B cell (primary cell): ENCODE measurements at regions of chr20 and their contacts with region 1.

Region 1: GRCh38 chr20:58236612-58237330 is 8.3 kb upstream of the ANKRD60 start:
- DNase-seq: peak; percentile 83
- ATAC-seq: peak; percentile 92
- H3K4me3 ChIP-seq: peak overlapping the region; percentile 63 to 88 (median 71)
- H3K4me3 Mint-ChIP-seq: peak overlapping the region; percentile 93
- H3K27ac ChIP-seq: peak overlapping the region; percentile 27 to 73
- H3K27ac Mint-ChIP-seq: peak overlapping the region; percentile 79
- H3K4me1 ChIP-seq: peaks cover 0 to 3% of the 10 kb centered on the region in 2 donors
- H3K4me1 Mint-ChIP-seq: peaks cover 8% of the 10 kb centered on the region
- H3K27me3 ChIP-seq: no peaks in the 10 kb centered on the region
- H3K27me3 Mint-ChIP-seq: no peaks in the 10 kb centered on the region
- CTCF ChIP-seq: peak; percentile 98

Region 2: DNA sequence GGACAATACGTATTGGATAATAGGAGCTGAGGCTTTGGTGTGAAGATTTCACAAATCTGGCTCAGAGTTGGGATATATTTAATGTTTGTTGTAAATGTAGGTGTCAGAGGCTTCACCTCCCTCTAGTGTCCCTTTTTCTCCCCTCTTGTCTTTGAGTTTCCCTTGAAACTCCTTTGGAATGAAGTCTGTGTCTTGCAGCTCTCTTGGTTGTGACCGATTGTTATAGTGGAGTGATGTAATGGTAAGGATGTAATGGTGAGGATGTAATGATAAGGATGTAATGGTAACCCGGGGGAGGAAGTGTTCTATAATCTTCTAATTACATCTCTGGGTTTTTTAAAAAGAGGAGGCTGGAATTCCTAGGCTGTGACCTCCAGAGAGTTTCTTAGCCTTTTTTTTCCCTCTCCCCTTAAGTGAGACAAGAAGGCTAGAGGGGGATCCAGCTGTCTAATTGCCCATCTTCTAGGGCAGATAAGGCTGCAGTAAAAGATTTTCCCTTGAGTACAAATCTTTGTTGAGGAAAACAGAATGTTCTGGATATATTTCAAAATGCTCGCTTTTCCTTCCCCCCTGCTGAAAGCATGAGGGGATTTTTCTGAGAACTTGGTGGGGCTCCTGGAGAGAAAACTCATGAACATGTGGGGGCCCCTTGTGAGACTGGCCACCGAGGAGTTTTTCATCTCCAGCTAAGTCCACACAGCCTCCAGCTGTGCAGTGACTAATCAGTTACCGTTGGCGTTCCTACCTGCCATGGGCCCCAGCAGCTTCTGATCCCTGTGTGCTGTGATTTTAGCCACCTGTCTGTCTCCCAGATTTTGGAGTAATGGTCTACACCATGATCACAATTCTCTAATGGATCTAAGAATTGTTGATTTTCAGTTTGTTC is 370.3 kb before region 1 on chr20:
- CTCF ChIA-PET with region 1: no interaction called
- POLR2A ChIA-PET with region 1: no interaction called
- intact Hi-C with region 1: no loop called
- DNase-seq: no peak
- ATAC-seq: no peak
- H3K4me3 ChIP-seq: no peak overlapping the region
- H3K4me3 Mint-ChIP-seq: no peak overlapping the region
- H3K27ac ChIP-seq: no peak overlapping the region
- H3K27ac Mint-ChIP-seq: no peak overlapping the region
- H3K4me1 ChIP-seq: no peaks in the 10 kb centered on the region
- H3K4me1 Mint-ChIP-seq: no peaks in the 10 kb centered on the region
- H3K27me3 ChIP-seq: peaks cover 0 to 25% (median 8%) of the 10 kb centered on the region in 4 experiments
- H3K27me3 Mint-ChIP-seq: peaks cover 57% of the 10 kb centered on the region
- CTCF ChIP-seq: no peak

Region 3: DNA sequence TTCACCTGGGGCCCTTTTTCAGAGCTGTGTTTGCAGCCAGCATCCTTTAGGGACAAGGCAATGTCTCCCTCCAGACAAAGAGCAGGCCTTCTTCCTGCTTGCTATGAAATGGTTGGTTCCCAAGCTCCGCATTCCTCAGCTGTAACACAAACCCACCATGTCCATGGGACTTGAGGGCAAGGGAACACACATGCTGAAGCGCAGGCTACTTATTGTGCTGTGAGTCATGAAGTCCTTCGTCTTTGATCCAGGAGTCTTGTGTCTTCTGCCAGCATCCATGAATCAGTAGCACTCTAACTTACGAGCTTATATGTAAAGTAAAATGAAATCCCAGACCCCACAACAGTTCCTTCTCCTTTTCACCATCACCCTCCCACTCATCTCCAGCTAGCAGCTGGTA is 67.3 kb before region 1 on chr20:
- CTCF ChIA-PET with region 1: no interaction called
- POLR2A ChIA-PET with region 1: no interaction called
- intact Hi-C with region 1: no loop called
- DNase-seq: no peak
- ATAC-seq: no peak
- H3K4me3 ChIP-seq: no peak overlapping the region
- H3K4me3 Mint-ChIP-seq: no peak overlapping the region
- H3K27ac ChIP-seq: no peak overlapping the region
- H3K27ac Mint-ChIP-seq: no peak overlapping the region
- H3K4me1 ChIP-seq: peaks cover 0 to 4% of the 10 kb centered on the region in 2 donors
- H3K4me1 Mint-ChIP-seq: peaks cover 7% of the 10 kb centered on the region
- H3K27me3 ChIP-seq: peaks cover 0 to 2% (median 0%) of the 10 kb centered on the region in 4 experiments
- H3K27me3 Mint-ChIP-seq: peaks cover 17% of the 10 kb centered on the region
- CTCF ChIP-seq: no peak

Region 4: GRCh38 chr20:58388882-58389323 is 152.1 kb after region 1 on chr20 and contains the start of gene VAPB:
- CTCF ChIA-PET with region 1: interaction called, 4 read pairs
- POLR2A ChIA-PET with region 1: no interaction called
- intact Hi-C with region 1: loop called (anchors 5 kb)
- DNase-seq: peak; percentile 97
- ATAC-seq: peak; percentile 96
- H3K4me3 ChIP-seq: peak within 1 kb of the TSS; percentile 60 to 86 (median 75)
- H3K4me3 Mint-ChIP-seq: peak within 1 kb of the TSS; percentile 95
- H3K27ac ChIP-seq: peak within 1 kb of the TSS; percentile 97 to 99
- H3K27ac Mint-ChIP-seq: peak within 1 kb of the TSS; percentile 94
- H3K4me1 ChIP-seq: peaks cover 18 to 21% of the 10 kb centered on the region in 2 donors
- H3K4me1 Mint-ChIP-seq: peaks cover 37% of the 10 kb centered on the region
- H3K27me3 ChIP-seq: peaks cover 0 to 3% (median 0%) of the 10 kb centered on the region in 4 experiments
- H3K27me3 Mint-ChIP-seq: peaks cover 3% of the 10 kb centered on the region
- CTCF ChIP-seq: no peak
- total RNA-seq, gene VAPB: 26.4 and 29.5 TPM in 2 replicates

Region 5: DNA sequence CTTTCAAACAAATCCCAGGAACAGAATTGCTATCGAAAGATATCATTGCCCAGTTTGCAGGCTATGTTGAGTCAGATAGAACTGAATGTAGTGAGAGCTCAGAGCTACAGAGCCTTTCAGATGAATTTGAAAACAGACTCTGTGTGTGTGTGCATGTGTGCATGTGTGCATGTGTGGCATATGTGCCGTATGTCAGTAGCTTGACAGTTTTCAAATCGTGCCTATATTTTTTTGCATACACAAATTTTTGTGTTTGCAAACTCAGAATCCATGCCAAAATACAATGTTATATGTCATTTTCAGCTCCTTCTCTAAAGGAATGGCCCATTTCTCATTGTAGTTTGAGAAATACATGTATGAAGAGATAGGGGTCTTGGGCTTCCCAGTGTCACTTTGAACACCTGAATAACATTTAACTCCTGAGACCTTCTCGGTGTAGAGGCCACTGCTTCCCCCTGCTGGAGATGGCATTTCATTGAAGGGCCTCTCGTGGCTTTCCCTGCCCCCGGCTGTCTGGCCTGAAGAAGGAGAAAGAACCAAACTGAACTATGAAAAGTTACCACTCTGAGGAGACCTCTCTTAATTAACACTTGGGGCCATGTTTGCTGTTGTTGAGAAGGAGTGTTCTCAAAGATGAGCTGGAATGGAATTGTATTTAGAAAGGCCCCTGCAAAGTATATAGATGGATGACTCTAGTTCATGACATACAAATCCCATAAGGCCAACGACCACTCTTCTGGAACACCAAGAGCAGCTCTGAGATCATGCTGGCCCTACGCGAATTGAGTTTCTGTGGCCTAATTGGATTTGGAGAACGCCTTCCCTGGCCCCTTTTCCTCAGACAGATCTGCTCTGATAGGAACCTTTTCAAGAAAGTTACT is 211.0 kb after region 1 on chr20:
- CTCF ChIA-PET with region 1: interaction called, 45 read pairs
- POLR2A ChIA-PET with region 1: no interaction called
- intact Hi-C with region 1: loop called (anchors 1 kb)
- DNase-seq: peak; percentile 53
- ATAC-seq: peak; percentile 45
- H3K4me3 ChIP-seq: no peak overlapping the region
- H3K4me3 Mint-ChIP-seq: no peak overlapping the region
- H3K27ac ChIP-seq: no peak overlapping the region
- H3K27ac Mint-ChIP-seq: no peak overlapping the region
- H3K4me1 ChIP-seq: peaks cover 0 to 5% of the 10 kb centered on the region in 2 donors
- H3K4me1 Mint-ChIP-seq: peaks cover 10% of the 10 kb centered on the region
- H3K27me3 ChIP-seq: no peaks in the 10 kb centered on the region
- H3K27me3 Mint-ChIP-seq: no peaks in the 10 kb centered on the region
- CTCF ChIP-seq: peak; percentile 62

Region 6: GRCh38 chr20:58634521-58635278 is 397.9 kb after region 1 on chr20:
- CTCF ChIA-PET with region 1: no interaction called
- POLR2A ChIA-PET with region 1: no interaction called
- intact Hi-C with region 1: no loop called
- DNase-seq: peak; percentile 54
- ATAC-seq: peak; percentile 80
- H3K4me3 ChIP-seq: peak overlapping the region in 4 of 5 experiments; percentile 36 to 55 (median 46)
- H3K4me3 Mint-ChIP-seq: peak overlapping the region; percentile 90
- H3K27ac ChIP-seq: peak overlapping the region in 1 of 2 donors; percentile 25
- H3K27ac Mint-ChIP-seq: no peak overlapping the region
- H3K4me1 ChIP-seq: peaks cover 13 to 15% of the 10 kb centered on the region in 2 donors
- H3K4me1 Mint-ChIP-seq: peaks cover 14% of the 10 kb centered on the region
- H3K27me3 ChIP-seq: peaks cover 0 to 32% (median 12%) of the 10 kb centered on the region in 4 experiments
- H3K27me3 Mint-ChIP-seq: peaks cover 40% of the 10 kb centered on the region
- CTCF ChIP-seq: no peak

Region 7: DNA sequence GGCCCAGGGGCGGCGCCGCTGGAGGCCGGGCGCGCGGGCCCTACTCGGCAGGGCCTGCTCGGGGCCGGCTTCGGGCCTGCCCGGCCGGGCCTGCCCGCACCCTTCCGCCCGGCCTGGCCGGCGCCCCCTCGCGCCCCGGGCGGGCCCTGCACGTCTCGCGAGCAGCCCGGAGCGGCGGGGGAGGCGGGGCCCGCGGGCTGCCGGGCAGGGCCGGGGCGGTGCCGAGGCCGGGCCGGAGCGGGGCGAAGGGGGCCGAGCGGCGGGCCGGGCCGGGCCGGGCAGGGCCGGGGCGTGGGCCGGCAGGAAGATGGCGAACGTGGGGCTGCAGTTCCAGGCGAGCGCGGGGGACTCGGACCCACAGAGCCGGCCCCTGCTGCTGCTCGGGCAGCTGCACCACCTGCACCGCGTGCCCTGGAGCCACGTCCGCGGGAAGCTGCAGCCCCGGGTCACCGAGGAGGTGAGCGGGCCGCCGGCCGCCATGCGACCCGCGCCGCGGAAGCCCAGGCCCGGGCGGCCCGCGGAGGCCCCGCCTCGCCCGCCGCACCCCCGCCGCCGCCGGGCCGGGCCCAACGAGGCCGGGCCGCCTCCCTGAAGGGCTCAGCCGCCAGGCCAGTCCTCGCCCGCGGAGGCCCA is 455.9 kb after region 1 on chr20 and contains the start of gene NPEPL1:
- CTCF ChIA-PET with region 1: interaction called, 3 read pairs
- POLR2A ChIA-PET with region 1: no interaction called
- intact Hi-C with region 1: loop called (anchors 2 kb)
- DNase-seq: peak; percentile 76
- ATAC-seq: peak; percentile 97
- H3K4me3 ChIP-seq: peak within 1 kb of the TSS in 4 of 5 experiments; percentile 22 to 57 (median 50)
- H3K4me3 Mint-ChIP-seq: peak within 1 kb of the TSS; percentile 86
- H3K27ac ChIP-seq: peak within 1 kb of the TSS; percentile 18 to 59
- H3K27ac Mint-ChIP-seq: peak within 1 kb of the TSS; percentile 80
- H3K4me1 ChIP-seq: peaks cover 8% of the 10 kb centered on the region in 2 donors
- H3K4me1 Mint-ChIP-seq: peaks cover 14% of the 10 kb centered on the region
- H3K27me3 ChIP-seq: no peaks in the 10 kb centered on the region
- H3K27me3 Mint-ChIP-seq: no peaks in the 10 kb centered on the region
- CTCF ChIP-seq: no peak
- total RNA-seq, gene NPEPL1: 34.3 and 37.2 TPM in 2 replicates

Region 8: DNA sequence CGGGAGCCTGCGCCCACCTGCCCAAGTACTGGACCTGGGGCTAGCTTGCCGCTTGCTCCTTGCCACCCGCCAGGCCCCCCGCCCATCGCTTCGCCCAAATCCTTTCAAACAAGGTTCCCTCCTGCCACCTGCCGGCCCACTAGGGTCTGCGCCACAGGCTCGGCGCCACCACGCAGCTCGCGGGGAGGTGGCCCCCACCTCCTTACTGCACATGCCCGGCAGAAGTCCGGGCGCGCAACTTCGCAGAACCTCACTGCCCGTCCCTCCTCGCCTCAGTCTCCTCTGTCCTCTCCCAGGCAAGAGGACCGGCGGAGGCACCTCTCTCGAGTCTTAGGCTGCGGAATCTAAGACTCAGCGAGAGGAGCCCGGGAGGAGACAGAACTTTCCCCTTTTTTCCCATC is 602.7 kb after region 1 on chr20:
- CTCF ChIA-PET with region 1: interaction called, 8 read pairs
- POLR2A ChIA-PET with region 1: no interaction called
- intact Hi-C with region 1: loop called (anchors 5 kb)
- DNase-seq: peak; percentile 48
- ATAC-seq: no peak
- H3K4me3 ChIP-seq: no peak overlapping the region
- H3K4me3 Mint-ChIP-seq: no peak overlapping the region
- H3K27ac ChIP-seq: no peak overlapping the region
- H3K27ac Mint-ChIP-seq: no peak overlapping the region
- H3K4me1 ChIP-seq: peaks cover 0 to 8% of the 10 kb centered on the region in 2 donors
- H3K4me1 Mint-ChIP-seq: peaks cover 7% of the 10 kb centered on the region
- H3K27me3 ChIP-seq: peaks cover 0 to 28% (median 4%) of the 10 kb centered on the region in 4 experiments
- H3K27me3 Mint-ChIP-seq: peaks cover 30% of the 10 kb centered on the region
- CTCF ChIP-seq: peak; percentile 26

Region 9: DNA sequence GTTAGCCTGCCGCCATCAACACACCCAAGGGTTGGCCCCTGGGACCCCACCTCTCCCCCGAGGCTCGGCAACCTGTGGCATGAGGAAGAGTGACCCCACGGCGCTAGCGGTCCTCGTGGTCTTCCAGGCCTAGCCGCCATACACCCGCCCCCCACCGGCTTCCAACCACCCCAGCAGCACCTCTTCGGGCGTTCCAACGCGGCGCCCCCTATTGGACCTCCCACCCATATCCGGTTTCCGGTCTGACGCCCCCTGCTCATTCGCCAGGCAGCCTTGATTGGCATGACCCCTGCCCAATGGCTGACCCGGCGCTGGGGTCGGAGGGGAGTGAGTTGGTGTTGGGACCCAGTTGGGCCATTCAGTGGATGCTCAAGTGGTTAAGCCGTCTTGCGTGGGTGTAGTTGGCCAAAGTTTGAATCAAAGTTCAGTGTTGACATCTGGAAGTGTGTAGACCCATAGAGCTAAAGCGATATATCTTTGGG is 614.0 kb after region 1 on chr20 and contains the start of gene GNAS-AS1:
- CTCF ChIA-PET with region 1: interaction called, 3 read pairs
- POLR2A ChIA-PET with region 1: no interaction called
- intact Hi-C with region 1: loop called (anchors 2 kb)
- DNase-seq: peak; percentile 76
- ATAC-seq: peak; percentile 89
- H3K4me3 ChIP-seq: peak within 1 kb of the TSS; percentile 31 to 58 (median 48)
- H3K4me3 Mint-ChIP-seq: peak within 1 kb of the TSS; percentile 93
- H3K27ac ChIP-seq: no peak within 1 kb of the TSS
- H3K27ac Mint-ChIP-seq: no peak within 1 kb of the TSS
- H3K4me1 ChIP-seq: peaks cover 35 to 51% of the 10 kb centered on the region in 2 donors
- H3K4me1 Mint-ChIP-seq: peaks cover 36% of the 10 kb centered on the region
- H3K27me3 ChIP-seq: peaks cover 0 to 66% (median 16%) of the 10 kb centered on the region in 4 experiments
- H3K27me3 Mint-ChIP-seq: peaks cover 42% of the 10 kb centered on the region
- CTCF ChIP-seq: no peak
- total RNA-seq, gene GNAS-AS1: 1.5 and 2.1 TPM in 2 replicates